Right ventricle myocardium inferior (tissue), 1 donor: ENCODE measurements at regions of chr4 and their contacts with region 1.

Region 1: DNA sequence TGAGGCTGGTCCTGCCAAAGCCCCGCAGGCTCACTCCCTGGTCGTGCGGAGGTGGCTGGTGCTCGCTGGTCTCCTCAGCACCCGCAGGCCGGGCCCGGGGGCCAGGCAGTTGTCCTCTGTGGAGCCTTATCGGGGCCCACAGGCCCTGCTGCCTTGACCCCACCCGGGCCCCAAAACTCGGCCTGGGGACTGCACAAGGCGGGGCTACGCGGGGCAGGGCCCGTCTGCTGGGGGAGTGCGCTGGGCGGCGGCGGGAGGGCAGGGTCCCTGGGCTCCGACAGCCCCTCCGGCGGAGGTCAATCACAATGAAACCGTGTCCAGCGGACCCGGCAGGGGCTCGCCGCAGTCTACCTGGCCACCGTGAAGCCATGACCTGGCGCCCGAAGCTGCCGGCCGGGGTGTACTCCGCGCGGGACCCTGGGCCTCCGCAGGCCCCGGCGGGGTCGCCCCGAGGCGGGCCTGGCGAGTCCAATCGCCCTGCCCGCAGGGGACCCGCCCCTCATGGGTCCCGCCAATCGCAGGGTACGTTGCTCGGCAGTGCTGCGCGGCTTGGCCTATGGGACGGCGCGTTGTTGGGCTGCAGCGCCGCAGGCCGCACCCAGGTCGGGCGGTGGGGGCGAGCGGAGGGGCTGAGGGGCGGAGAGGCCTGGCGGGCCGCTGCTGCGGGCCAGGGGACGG is at the start of gene ADD1:
- DNase-seq: peak; percentile 94
- ATAC-seq: peak; percentile 99
- total RNA-seq, gene ADD1: 231 TPM

Region 2: DNA sequence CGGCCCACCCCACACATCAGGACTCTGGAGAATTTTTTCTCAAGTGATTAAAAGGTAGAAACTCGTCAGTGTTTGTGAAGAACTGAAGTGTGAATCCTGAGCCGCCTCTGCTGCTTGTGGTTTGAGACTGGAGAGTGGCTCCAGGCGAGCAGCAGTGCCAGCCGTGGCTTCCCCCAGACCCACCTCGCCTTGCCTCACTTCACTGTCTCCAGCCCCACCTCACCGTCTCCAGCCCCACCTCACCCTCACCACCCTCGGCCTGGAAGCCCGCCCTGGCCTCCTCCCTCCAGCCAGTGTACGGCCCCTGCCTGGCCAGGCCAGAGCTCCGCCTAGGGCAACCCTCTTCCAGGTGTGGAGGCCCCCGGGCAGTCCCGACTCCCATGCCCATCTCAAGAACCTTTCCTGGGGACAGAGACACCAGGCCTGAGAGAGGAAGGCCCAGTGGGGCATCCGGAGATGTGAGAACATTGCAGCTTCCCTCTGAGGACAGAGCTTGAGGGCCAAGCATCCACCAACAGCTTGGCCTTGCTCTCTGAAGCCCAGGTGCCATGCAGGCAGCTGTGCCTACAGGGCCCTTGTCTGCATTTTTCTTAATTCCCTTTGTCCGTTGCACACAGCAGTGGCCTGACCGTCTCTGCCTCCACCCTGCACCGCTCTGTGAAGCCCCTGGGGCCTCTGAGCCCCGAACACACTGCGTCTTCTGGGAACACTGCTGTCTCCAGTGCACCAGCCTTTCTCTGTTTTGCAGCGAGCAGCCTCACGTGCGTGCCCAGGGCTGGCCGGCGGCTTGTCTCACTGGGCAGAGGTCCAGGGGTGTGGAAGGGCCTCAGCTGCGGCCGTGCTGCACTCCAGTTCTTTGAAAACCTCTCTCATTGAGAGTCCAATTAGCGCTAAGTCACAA is 36.8 kb before region 1 on chr4:
- intact Hi-C with region 1: loop called (anchors 5 kb)
- DNase-seq: peak; percentile 81
- ATAC-seq: peak; percentile 57

Region 3: GRCh38 chr4:2934813-2935761 is 91.7 kb after region 1 on chr4:
- intact Hi-C with region 1: loop called (anchors 5 kb)
- DNase-seq: peak; percentile 96
- ATAC-seq: peak; percentile 80